ENCODE measurements at regions of chr14 and their contacts with region 1.

Region 1: DNA sequence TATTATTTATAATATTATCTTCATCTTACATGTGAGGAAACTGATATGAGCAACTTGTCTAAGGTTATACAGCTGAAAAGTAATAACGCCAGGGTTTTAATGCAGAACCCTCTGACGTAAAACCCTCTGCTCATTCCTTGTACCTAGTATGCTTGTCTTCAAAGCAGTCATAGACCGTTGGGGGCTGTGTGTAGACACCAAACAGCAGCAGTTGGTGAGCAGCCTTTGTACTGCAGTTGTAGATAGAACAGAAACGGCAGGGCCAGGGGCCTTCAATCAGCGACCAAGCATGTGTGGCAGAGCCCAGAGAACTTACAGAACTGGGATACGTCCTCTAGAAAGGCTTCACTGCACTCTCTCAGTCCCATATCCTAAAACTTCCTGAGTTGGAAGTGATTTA is 28.1 kb downstream of the EVL start:
- DNase-seq: no peak
- ATAC-seq: no peak
- H3K4me3 Mint-ChIP-seq: no peak overlapping the region
- H3K27ac Mint-ChIP-seq: peak overlapping the region; percentile 30
- H3K4me1 Mint-ChIP-seq: peaks cover 6% of the 10 kb centered on the region
- H3K27me3 Mint-ChIP-seq: no peaks in the 10 kb centered on the region
- CTCF ChIP-seq: no peak

Region 2: GRCh38 chr14:100078991-100079725 is 14.2 kb before region 1 on chr14:
- CTCF ChIA-PET with region 1: no interaction called
- POLR2A ChIA-PET with region 1: no interaction called
- intact Hi-C with region 1: loop called (anchors 1 kb)
- DNase-seq: no peak
- ATAC-seq: peak; percentile 60
- H3K4me3 Mint-ChIP-seq: peak overlapping the region; percentile 49
- H3K27ac Mint-ChIP-seq: peak overlapping the region; percentile 80
- H3K4me1 Mint-ChIP-seq: peaks cover 93% of the 10 kb centered on the region
- H3K27me3 Mint-ChIP-seq: no peaks in the 10 kb centered on the region
- CTCF ChIP-seq: no peak

Region 3: GRCh38 chr14:100306420-100307219 is 213.3 kb after region 1 on chr14 and contains the start of gene SLC25A29:
- CTCF ChIA-PET with region 1: no interaction called
- POLR2A ChIA-PET with region 1: no interaction called
- intact Hi-C with region 1: no loop called
- DNase-seq: peak; percentile 86
- ATAC-seq: peak; percentile 93
- H3K4me3 Mint-ChIP-seq: peak within 1 kb of the TSS; percentile 87
- H3K27ac Mint-ChIP-seq: peak within 1 kb of the TSS; percentile 66
- H3K4me1 Mint-ChIP-seq: peaks cover 21% of the 10 kb centered on the region
- H3K27me3 Mint-ChIP-seq: no peaks in the 10 kb centered on the region
- CTCF ChIP-seq: no peak
- total RNA-seq, gene SLC25A29: 20.6 and 28.8 TPM in 2 replicates

Measured in activated B cell treated with CpG ODN at 0.5 μM for 24 hours (primary cell).